ENCODE measurements at regions of chr19 and their contacts with region 1.

Region 1: DNA sequence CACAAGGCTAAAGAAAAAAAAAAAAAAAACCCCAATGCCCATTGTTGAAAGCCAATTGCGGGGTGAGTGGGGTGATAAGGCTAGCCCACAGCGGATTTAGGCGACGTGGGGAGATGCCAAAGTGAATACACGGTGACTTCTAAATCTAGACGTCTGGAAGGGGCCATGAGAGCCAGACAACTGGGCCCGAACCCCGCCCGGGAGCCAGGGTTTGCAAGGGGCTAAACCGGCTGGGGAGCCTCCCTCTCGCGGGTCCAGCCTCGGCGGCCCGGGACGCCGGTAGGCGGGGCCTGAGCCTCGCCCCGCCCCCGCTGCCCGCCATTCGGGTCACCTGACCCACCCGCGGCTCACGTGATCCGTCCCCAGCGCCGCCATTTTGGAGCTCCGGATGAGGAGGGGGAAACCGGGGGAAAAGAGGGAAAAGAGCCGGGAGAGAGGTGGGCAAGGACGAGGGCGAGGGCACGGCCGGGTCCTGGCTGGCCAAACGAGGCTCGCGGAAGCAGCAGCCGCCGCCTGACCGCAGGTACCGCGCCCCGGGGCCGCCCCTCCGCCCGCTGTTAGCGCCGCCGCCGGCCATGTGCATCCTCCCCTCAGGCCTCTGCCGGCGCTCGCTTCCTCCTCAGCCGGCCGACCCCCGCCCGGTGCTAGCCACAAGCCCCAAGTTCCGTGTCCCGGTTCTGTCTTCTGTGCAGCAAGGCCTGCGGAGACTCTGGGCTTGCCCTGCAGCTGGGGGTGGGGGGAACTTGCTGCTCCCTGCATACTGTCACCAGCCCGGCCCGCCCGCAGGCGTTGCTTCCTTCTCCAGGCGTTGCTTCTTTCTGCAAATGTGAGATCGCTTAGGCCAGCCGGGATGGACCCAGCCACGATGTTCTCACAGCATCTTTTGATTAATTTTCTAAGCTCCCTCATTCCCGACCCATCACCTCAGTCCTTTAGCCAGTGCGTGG is at the start of gene ZNF507:
- DNase-seq: peak; percentile 72 to 97 (median 82)

Region 2: GRCh38 chr19:32357720-32358119 is 12.2 kb after region 1 on chr19:
- intact Hi-C with region 1: no loop called
- DNase-seq: no peak

Region 3: GRCh38 chr19:32392901-32393300 is 47.4 kb after region 1 on chr19:
- intact Hi-C with region 1: no loop called
- DNase-seq: no peak

Region 4: DNA sequence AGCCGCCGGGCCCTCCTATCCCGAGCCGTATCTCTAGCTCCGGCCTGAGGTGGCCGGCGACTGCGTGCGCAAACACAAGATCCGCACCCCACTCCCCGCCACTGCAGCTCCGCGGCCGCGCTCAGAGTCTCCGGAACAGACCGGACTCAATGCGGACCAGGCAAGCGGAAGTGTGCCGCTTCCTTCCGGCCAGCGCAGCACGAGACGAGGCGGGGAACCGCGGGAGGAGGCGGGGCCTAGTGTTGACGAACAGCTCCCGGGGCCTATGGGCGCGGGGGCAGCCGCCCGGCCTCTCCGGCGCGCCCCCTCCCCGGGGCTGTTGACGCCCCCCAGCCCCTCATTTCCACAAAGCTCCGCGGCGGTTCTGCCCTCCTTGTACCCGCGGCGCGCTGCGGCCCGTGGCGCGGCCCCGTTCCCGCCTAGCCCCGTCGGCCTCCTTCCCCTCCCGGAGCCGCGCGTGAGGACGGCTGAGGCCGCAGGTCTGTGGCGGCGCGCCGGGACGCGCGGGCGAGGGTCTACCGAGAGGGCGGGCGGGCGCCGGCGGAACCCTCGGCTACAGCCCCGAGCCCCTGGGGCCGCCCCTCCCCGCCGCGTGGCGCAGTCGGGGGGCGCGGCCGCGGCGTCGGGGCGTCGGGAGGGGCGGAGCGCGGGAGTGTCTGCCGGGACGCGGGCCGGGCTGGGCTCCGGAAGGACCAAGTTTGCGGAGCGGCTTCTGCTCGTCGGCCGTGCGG is 60.1 kb after region 1 on chr19 and contains the start of gene DPY19L3:
- intact Hi-C with region 1: loop called (anchors 2 kb)
- DNase-seq: peak; percentile 95 to 99 (median 97)

Measured in posterior cingulate gyrus (tissue), 11 donors.